ENCODE measurements at regions of chr21 and their contacts with region 1.

Region 1: GRCh38 chr21:46323227-46324128 is at the start of gene C21orf58:
- DNase-seq: peak; percentile 98
- H3K4me3 ChIP-seq: peak within 1 kb of the TSS; percentile 69 to 99 (median 86)
- H3K27ac ChIP-seq: peak within 1 kb of the TSS; percentile 84
- H3K4me1 ChIP-seq: peaks cover 29% of the 10 kb centered on the region
- H3K27me3 ChIP-seq: no peaks in the 10 kb centered on the region
- CTCF ChIP-seq: no peak
- POLR2A ChIP-seq: peak; percentile 84
- total RNA-seq, gene C21orf58: 19.3 and 24.3 TPM in 2 replicates

Region 2: DNA sequence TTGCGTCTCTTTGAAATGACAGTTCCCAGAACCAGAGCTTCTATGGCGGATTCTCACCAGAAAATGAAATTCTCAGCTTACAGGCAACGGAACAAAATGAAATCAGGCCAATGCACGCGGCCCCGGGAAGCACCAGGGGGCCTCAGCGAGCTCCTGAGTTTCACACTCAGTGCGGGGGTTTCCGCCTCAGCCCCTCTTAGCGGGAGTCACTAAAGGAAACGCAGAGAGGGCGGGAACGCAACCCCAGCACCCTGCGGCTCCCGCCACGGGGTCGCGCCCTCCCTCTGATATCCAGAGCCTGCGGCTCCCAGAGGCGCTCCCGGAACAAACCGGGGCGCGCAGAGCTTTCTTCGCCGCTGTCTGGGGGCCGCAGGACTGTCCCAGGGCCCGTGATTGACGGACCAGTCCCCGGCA is 349.8 kb before region 1 on chr21:
- CTCF ChIA-PET with region 1: no interaction called
- POLR2A ChIA-PET with region 1: no interaction called
- dilution Hi-C with region 1: no loop called
- intact Hi-C with region 1: loop called (anchors 2 kb)
- DNase-seq: peak; percentile 77
- H3K4me3 ChIP-seq: peak overlapping the region in 2 of 3 experiments; percentile 34 to 56
- H3K27ac ChIP-seq: peak overlapping the region; percentile 35
- H3K4me1 ChIP-seq: peaks cover 29% of the 10 kb centered on the region
- H3K27me3 ChIP-seq: peaks cover 0 to 2% of the 10 kb centered on the region in 2 experiments
- CTCF ChIP-seq: peak; percentile 70 to 83
- POLR2A ChIP-seq: no peak

Region 3: DNA sequence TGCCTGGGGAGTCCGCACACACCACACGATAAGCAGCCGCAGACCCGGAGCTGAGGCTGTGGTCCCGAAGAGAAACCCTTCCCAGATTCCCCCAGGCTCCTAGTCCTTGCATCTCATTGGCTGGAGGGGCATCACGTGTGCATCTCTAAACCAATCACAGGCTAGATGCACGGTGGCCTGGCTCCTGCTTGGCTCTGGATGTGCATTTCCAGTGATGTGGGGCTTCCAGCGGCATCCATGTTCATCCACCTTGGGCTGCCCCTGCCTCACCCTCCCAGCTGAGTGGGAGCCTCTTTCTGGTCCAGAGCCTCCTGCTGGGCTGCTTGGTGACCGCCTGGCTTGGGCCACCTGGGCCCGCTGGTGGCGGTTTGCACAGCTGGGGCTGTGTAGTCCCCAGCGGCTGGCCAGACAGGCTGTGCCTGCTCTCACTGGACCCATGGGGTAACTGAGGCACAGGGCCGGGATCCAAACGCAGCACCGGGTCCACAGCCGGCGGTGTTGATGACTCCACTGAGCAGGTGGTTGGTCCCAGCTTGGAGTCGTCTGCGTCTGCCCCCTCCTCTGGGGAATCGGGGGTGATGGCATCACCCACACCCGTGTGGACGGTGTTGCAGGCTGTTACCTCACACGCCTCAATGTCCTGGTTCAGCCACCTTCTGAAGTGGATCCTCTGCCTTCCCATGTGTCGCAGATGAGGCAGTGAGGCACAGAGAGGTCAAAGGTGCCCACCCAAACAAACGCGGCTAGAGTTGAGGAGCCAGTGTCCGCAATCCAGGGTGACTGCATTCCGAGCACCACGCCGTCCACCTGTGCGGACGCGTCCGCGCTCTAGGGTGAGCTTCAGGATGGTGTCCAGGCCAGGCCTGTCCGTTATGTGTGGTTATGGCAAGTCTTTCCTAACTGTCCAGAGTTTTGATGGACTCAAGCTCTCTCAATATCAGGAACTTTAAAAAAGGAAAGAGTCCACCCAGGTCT is 300.6 kb before region 1 on chr21:
- CTCF ChIA-PET with region 1: no interaction called
- POLR2A ChIA-PET with region 1: no interaction called
- dilution Hi-C with region 1: no loop called
- intact Hi-C with region 1: no loop called
- DNase-seq: no peak
- H3K4me3 ChIP-seq: no peak overlapping the region
- H3K27ac ChIP-seq: no peak overlapping the region
- H3K4me1 ChIP-seq: no peaks in the 10 kb centered on the region
- H3K27me3 ChIP-seq: peaks cover 14 to 38% of the 10 kb centered on the region in 2 experiments
- CTCF ChIP-seq: no peak
- POLR2A ChIP-seq: no peak

Region 4: DNA sequence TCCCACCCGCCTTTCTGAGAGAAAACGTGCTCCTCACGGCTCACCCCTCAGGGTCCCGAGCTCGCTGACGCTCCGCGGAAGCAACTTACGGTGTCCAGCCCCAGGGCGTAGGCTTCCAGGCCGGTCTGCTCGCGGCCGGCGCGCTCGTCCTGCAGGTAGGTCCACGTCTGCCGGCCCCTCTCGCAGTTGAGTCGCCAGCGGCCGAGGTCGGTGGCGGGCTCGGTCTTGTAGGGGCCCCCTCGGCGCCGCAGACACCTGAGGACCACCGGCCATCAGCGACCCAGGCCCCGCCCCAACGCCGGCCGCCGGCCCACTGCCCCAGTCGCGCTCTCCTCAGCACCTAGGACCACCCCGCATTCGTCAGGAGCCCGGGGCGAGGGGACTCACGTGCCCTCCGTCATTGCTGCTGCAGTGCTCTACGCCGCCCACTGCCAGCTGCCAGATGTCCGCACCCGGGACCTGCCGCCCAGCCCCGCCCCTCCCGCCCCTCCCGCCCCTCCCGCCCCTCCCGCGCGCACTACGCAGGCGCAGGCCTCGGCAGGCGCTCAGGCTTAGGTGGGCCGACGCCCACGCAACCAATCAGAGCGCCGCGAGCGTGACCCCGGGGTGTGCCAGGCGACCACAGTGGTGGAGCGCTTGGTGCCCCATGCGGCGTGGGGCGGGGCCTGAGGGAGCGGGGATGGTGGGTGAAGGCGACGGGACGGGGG is 95.0 kb before region 1 on chr21 and contains the start of gene LSS:
- CTCF ChIA-PET with region 1: interaction called, 3 read pairs
- POLR2A ChIA-PET with region 1: no interaction called
- dilution Hi-C with region 1: no loop called
- intact Hi-C with region 1: loop called (anchors 2 kb)
- DNase-seq: peak; percentile 96
- H3K4me3 ChIP-seq: peak within 1 kb of the TSS; percentile 73 to 90 (median 81)
- H3K27ac ChIP-seq: peak within 1 kb of the TSS; percentile 1
- H3K4me1 ChIP-seq: peaks cover 22% of the 10 kb centered on the region
- H3K27me3 ChIP-seq: no peaks in the 10 kb centered on the region
- CTCF ChIP-seq: no peak
- POLR2A ChIP-seq: no peak
- total RNA-seq, gene LSS: 141 TPM in 2 replicates

Region 5: GRCh38 chr21:46285761-46286496 is 37.5 kb before region 1 on chr21 and contains the start of gene YBEY:
- CTCF ChIA-PET with region 1: interaction called, 14 read pairs
- POLR2A ChIA-PET with region 1: interaction called, 3 read pairs
- dilution Hi-C with region 1: no loop called
- intact Hi-C with region 1: loop called (anchors 1 kb)
- DNase-seq: peak; percentile 88
- H3K4me3 ChIP-seq: peak within 1 kb of the TSS; percentile 53 to 90 (median 86)
- H3K27ac ChIP-seq: peak within 1 kb of the TSS; percentile 69
- H3K4me1 ChIP-seq: peaks cover 33% of the 10 kb centered on the region
- H3K27me3 ChIP-seq: no peaks in the 10 kb centered on the region
- CTCF ChIP-seq: peak; percentile 33 to 48
- POLR2A ChIP-seq: peak; percentile 94
- total RNA-seq, gene YBEY: 6.1 and 10.5 TPM in 2 replicates

Region 6: GRCh38 chr21:46350571-46350970 is 27.1 kb after region 1 on chr21:
- CTCF ChIA-PET with region 1: no interaction called
- POLR2A ChIA-PET with region 1: no interaction called
- dilution Hi-C with region 1: no loop called
- intact Hi-C with region 1: no loop called
- DNase-seq: no peak
- H3K4me3 ChIP-seq: no peak overlapping the region
- H3K27ac ChIP-seq: no peak overlapping the region
- H3K4me1 ChIP-seq: no peaks in the 10 kb centered on the region
- H3K27me3 ChIP-seq: no peaks in the 10 kb centered on the region
- CTCF ChIP-seq: no peak
- POLR2A ChIP-seq: no peak

Region 7: GRCh38 chr21:46437096-46437498 is 113.6 kb after region 1 on chr21:
- CTCF ChIA-PET with region 1: no interaction called
- POLR2A ChIA-PET with region 1: no interaction called
- dilution Hi-C with region 1: no loop called
- intact Hi-C with region 1: no loop called
- DNase-seq: no peak
- H3K4me3 ChIP-seq: no peak overlapping the region
- H3K27ac ChIP-seq: no peak overlapping the region
- H3K4me1 ChIP-seq: no peaks in the 10 kb centered on the region
- H3K27me3 ChIP-seq: no peaks in the 10 kb centered on the region
- CTCF ChIP-seq: no peak
- POLR2A ChIP-seq: no peak

Region 8: DNA sequence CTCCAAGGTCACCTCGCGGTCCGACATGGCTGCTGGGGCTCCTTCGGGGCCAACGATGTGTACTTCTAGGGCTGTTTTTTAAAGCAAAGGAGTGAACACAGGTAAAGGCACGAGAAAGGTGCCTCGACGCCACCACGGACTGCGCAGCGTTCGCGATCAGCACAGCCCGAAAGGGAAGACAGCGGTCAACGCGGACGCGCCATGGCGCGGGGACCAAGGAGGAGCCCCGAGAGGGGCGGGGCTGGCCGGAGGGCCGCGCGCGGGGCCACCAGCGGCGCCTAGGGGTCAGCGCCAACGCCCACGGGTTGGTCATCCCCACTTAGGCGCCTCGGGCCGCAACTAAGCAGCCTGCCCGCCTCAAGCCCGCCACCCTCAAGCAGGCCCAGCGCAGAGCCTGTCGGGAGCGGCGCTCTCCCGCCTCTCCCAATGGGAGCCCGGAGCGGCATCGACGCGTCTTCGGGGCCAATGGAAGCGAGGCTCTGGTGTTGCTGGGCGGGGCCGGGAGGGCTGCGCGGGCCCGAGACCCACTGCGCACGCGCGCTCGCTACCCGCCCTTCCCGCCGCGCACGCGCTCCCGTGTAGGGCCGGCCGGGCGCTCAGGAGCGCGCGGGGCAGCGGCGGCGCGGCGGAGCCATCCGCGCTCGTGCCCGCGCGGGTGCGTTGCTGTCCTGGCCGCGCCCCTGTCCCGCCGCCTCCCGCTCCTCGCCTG is 135.0 kb after region 1 on chr21 and contains the start of gene DIP2A:
- CTCF ChIA-PET with region 1: no interaction called
- POLR2A ChIA-PET with region 1: no interaction called
- dilution Hi-C with region 1: no loop called
- intact Hi-C with region 1: loop called (anchors 2 kb)
- DNase-seq: peak; percentile 98
- H3K4me3 ChIP-seq: peak within 1 kb of the TSS; percentile 58 to 85 (median 74)
- H3K27ac ChIP-seq: peak within 1 kb of the TSS; percentile 45
- H3K4me1 ChIP-seq: peaks cover 35% of the 10 kb centered on the region
- H3K27me3 ChIP-seq: no peaks in the 10 kb centered on the region
- CTCF ChIP-seq: no peak
- POLR2A ChIP-seq: peak; percentile 82
- total RNA-seq, gene DIP2A: 57.6 and 62.1 TPM in 2 replicates